Heart left ventricle (tissue), 16 donors: ENCODE measurements at regions of chr3 and their contacts with region 1.

Region 1: GRCh38 chr3:127455541-127456450 is 134.7 kb downstream of the TPRA1 start:
- DNase-seq: peak; percentile 57 to 86 (median 66)
- ATAC-seq: peak; percentile 55 to 93 (median 87)
- H3K4me3 ChIP-seq: peak overlapping the region in 10 of 12 donors; percentile 8 to 47 (median 30)
- H3K27ac ChIP-seq: no peak overlapping the region
- H3K4me1 ChIP-seq: peaks cover 0 to 24% (median 17%) of the 10 kb centered on the region in 12 donors
- H3K27me3 ChIP-seq: peaks cover 12 to 68% (median 54%) of the 10 kb centered on the region in 9 donors
- CTCF ChIP-seq: peak; percentile 85 to 98 (median 93)
- POLR2A ChIP-seq: no peak

Region 2: GRCh38 chr3:126522363-126522788 is 933.4 kb before region 1 on chr3:
- intact Hi-C with region 1: loop called in 7 of 10 experiments (anchors 5 to 10 kb)
- DNase-seq: peak; percentile 50 to 65 (median 56)
- ATAC-seq: peak in 2 of 4 donors; percentile 38 to 53
- H3K4me3 ChIP-seq: no peak overlapping the region
- H3K27ac ChIP-seq: no peak overlapping the region
- H3K4me1 ChIP-seq: peaks cover 0 to 17% (median 5%) of the 10 kb centered on the region in 12 donors
- H3K27me3 ChIP-seq: peaks cover 0 to 25% (median 7%) of the 10 kb centered on the region in 9 donors
- CTCF ChIP-seq: peak; percentile 68 to 96 (median 91)
- POLR2A ChIP-seq: no peak

Region 3: GRCh38 chr3:126752303-126752842 is 703.4 kb before region 1 on chr3:
- intact Hi-C with region 1: loop called (anchors 1 to 10 kb)
- DNase-seq: peak; percentile 72 to 88 (median 79)
- ATAC-seq: peak; percentile 85 to 94 (median 90)
- H3K4me3 ChIP-seq: no peak overlapping the region
- H3K27ac ChIP-seq: no peak overlapping the region
- H3K4me1 ChIP-seq: peaks cover 0 to 38% (median 12%) of the 10 kb centered on the region in 12 donors
- H3K27me3 ChIP-seq: no peaks in the 10 kb centered on the region
- CTCF ChIP-seq: peak; percentile 74 to 91 (median 86)
- POLR2A ChIP-seq: no peak

Region 4: GRCh38 chr3:126995926-126996512 is 459.8 kb before region 1 on chr3:
- intact Hi-C with region 1: loop called in 3 of 10 experiments (anchors 10 kb)
- DNase-seq: no peak
- ATAC-seq: no peak
- H3K4me3 ChIP-seq: no peak overlapping the region
- H3K27ac ChIP-seq: no peak overlapping the region
- H3K4me1 ChIP-seq: peaks cover 11 to 93% (median 50%) of the 10 kb centered on the region in 12 donors
- H3K27me3 ChIP-seq: no peaks in the 10 kb centered on the region
- CTCF ChIP-seq: peak in 2 of 12 donors; percentile 14 to 18
- POLR2A ChIP-seq: no peak

Region 5: GRCh38 chr3:127182471-127183367 is 273.1 kb before region 1 on chr3:
- intact Hi-C with region 1: loop called in 1 of 10 experiments (anchors 10 kb)
- DNase-seq: peak in 1 of 5 donors; percentile 44
- ATAC-seq: peak in 1 of 4 donors; percentile 41
- H3K4me3 ChIP-seq: no peak overlapping the region
- H3K27ac ChIP-seq: no peak overlapping the region
- H3K4me1 ChIP-seq: no peaks in the 10 kb centered on the region
- H3K27me3 ChIP-seq: no peaks in the 10 kb centered on the region
- CTCF ChIP-seq: no peak
- POLR2A ChIP-seq: no peak

Region 6: GRCh38 chr3:128170805-128171516 is 715.2 kb after region 1 on chr3:
- intact Hi-C with region 1: no loop called
- DNase-seq: peak in 4 of 5 donors; percentile 55 to 64 (median 62)
- ATAC-seq: peak; percentile 54 to 75 (median 72)
- H3K4me3 ChIP-seq: no peak overlapping the region
- H3K27ac ChIP-seq: no peak overlapping the region
- H3K4me1 ChIP-seq: peaks cover 0 to 73% (median 40%) of the 10 kb centered on the region in 12 donors
- H3K27me3 ChIP-seq: no peaks in the 10 kb centered on the region
- CTCF ChIP-seq: peak; percentile 49 to 88 (median 68)
- POLR2A ChIP-seq: no peak